ENCODE measurements at regions of chr1 and their contacts with region 1.

Region 1: GRCh38 chr1:46622344-46622743 is 5.7 kb upstream of the MOB3C start:
- DNase-seq: peak in 1 of 2 experiments; percentile 46
- H3K4me3 ChIP-seq: no peak overlapping the region
- H3K27ac ChIP-seq: no peak overlapping the region
- H3K4me1 ChIP-seq: peaks cover 20% of the 10 kb centered on the region
- H3K27me3 ChIP-seq: no peaks in the 10 kb centered on the region
- CTCF ChIP-seq: peak; percentile 65

Region 2: GRCh38 chr1:46724991-46725735 is 102.8 kb after region 1 on chr1:
- CTCF ChIA-PET with region 1: no interaction called
- POLR2A ChIA-PET with region 1: no interaction called
- intact Hi-C with region 1: loop called (anchors 1 kb)
- DNase-seq: peak; percentile 45 to 65
- H3K4me3 ChIP-seq: no peak overlapping the region
- H3K27ac ChIP-seq: no peak overlapping the region
- H3K4me1 ChIP-seq: peaks cover 20% of the 10 kb centered on the region
- H3K27me3 ChIP-seq: peaks cover 4% of the 10 kb centered on the region; the same call in 1 of the 2 replicates
- CTCF ChIP-seq: peak; percentile 91

Region 3: GRCh38 chr1:46793126-46793525 is 170.8 kb after region 1 on chr1:
- CTCF ChIA-PET with region 1: no interaction called
- POLR2A ChIA-PET with region 1: no interaction called
- intact Hi-C with region 1: no loop called
- DNase-seq: no peak
- H3K4me3 ChIP-seq: no peak overlapping the region
- H3K27ac ChIP-seq: no peak overlapping the region
- H3K4me1 ChIP-seq: no peaks in the 10 kb centered on the region
- H3K27me3 ChIP-seq: no peaks in the 10 kb centered on the region
- CTCF ChIP-seq: no peak

Region 4: DNA sequence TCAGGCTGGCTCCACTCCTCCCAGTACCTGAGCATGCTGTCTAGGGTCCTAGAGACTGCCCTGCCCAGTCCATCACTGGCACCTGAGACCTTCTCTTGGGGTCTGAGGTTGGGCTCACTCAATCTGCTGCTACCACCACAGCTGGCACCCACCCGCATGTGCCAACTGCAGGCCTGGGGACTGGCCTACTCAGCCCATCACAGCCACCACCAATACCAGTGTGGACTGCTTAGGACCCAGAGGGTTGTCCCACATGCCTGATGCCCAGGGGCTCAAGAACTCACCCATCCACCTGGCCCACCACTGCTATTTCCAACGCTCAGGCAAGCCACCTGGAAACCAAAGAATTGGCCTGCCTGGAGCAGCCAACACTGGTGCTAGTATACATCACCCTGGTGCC is 240.0 kb after region 1 on chr1:
- CTCF ChIA-PET with region 1: no interaction called
- POLR2A ChIA-PET with region 1: no interaction called
- intact Hi-C with region 1: loop called (anchors 10 kb)
- DNase-seq: no peak
- H3K4me3 ChIP-seq: no peak overlapping the region
- H3K27ac ChIP-seq: no peak overlapping the region
- H3K4me1 ChIP-seq: peaks cover 5% of the 10 kb centered on the region
- H3K27me3 ChIP-seq: no peaks in the 10 kb centered on the region
- CTCF ChIP-seq: no peak

Measured in PC-9 (cell line).